ENCODE measurements at regions of chr20 and their contacts with region 1.

Region 1: DNA sequence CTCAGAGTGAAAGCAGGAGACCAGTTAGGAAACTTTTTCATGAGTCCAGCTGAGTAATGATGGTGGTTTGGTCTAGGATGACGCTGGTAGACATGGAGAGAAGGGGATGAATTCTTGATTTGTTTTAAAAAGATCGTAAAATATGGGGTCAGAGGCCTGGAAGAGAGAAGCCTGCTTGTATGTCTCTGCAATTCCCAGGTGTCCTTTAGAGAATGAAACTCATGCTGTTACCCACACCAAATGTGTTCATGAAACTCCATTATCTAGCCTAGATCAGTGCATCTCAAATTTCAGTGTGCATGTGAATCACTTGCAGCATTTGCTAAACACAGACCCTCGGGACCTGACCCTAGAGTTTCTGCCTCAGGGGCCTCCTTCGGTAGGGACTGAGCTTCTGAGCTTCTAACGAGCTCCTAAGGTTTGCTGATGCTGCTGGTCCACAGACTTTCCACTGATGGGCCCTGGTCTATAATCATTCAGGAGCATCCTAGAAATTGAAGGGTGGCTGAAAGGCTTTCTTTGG is 302.0 kb upstream of the PLCB4 start:
- DNase-seq: no peak
- ATAC-seq: no peak
- H3K4me3 Mint-ChIP-seq: no peak overlapping the region
- H3K27ac Mint-ChIP-seq: no peak overlapping the region
- H3K4me1 Mint-ChIP-seq: peaks cover 5% of the 10 kb centered on the region
- H3K27me3 Mint-ChIP-seq: no peaks in the 10 kb centered on the region

Region 2: DNA sequence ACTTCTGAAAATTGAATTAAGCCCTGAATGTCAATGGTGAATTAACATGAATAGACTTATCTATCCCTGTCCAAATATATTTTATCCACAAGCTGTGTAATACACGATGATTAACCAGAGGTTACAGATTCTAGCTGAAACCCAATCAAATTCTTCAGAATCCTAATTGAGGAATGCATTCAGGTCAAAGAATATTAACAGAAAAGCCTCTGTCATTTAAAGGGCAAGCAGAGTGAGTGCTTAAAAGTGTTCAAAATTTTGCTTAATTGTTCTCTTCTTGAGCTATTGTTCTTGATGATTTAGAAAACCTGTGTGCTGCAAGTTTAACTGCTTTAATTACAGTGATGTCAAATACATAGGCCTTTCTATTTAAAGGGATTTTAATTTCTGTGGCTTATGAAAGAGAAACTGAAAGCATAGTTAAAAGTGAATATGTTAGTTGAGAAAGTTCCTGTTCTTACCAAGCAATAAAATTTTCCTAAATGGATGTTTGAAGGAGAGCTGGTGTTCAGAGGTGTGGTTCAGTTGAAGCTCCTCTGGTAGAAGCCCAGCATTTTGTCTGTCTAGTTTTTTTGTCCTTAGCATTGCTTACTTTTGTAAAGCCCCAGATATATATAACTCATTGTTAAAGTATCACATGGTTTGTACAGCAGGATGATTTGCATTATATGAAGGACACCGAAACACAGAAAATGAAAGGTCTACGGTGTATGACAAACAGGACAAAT is 164.4 kb before region 1 on chr20:
- CTCF ChIA-PET with region 1: no interaction called
- DNase-seq: no peak
- ATAC-seq: peak; percentile 55
- H3K4me3 Mint-ChIP-seq: peak overlapping the region; percentile 44
- H3K27ac Mint-ChIP-seq: peak overlapping the region; percentile 58
- H3K4me1 Mint-ChIP-seq: peaks cover 20% of the 10 kb centered on the region
- H3K27me3 Mint-ChIP-seq: no peaks in the 10 kb centered on the region

Region 3: DNA sequence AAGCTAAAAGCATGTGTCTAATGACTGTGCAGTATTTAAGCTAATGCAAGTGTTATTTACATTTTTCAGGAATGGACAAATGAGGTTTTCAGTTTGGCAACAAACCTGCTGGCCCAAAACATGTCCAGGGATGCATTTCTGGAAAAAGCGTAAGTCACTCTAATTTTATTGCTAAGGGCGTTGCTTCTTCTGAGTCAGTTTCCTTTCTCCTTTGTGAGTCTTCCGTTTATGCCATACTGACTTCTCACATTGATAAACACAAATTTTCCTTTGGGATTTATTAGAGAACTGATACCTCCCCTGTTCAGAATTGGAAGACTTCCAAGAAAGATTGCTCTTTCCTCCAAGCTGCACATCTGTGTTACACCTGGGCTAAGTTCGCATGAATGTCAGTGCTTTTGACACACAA is 120.9 kb before region 1 on chr20:
- CTCF ChIA-PET with region 1: no interaction called
- DNase-seq: no peak
- ATAC-seq: no peak
- H3K4me3 Mint-ChIP-seq: no peak overlapping the region
- H3K27ac Mint-ChIP-seq: no peak overlapping the region
- H3K4me1 Mint-ChIP-seq: peaks cover 7% of the 10 kb centered on the region
- H3K27me3 Mint-ChIP-seq: no peaks in the 10 kb centered on the region

Region 4: DNA sequence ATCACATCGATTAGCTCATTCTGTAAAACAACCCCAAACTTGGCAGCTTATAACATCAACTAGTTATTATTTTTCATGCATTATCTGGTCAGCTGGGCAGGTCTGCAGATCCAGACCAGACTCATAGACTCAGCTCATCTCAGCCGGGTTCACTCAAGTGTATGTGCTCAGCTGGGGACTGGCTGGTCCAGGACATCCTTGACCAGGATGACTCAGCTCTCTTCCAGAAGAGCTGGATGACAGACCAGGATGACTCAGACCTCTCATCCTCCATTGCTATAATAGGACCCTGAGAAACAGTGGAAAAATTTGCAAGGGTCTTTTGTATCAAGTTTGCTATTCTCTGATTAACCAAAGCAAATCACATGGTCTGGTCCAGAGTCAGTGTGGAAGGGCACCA is 10.5 kb before region 1 on chr20:
- CTCF ChIA-PET with region 1: interaction called, 10 read pairs
- DNase-seq: no peak
- ATAC-seq: no peak
- H3K4me3 Mint-ChIP-seq: no peak overlapping the region
- H3K27ac Mint-ChIP-seq: no peak overlapping the region
- H3K4me1 Mint-ChIP-seq: peaks cover 2% of the 10 kb centered on the region
- H3K27me3 Mint-ChIP-seq: no peaks in the 10 kb centered on the region

Measured in activated CD8-positive, alpha-beta memory T cell treated with anti-CD3 and anti-CD28 coated beads, Interleukin-2, amount 10 ng/mL, durations not matched to agents 7 days and 5 days (primary cell).